PC-9 (cell line): ENCODE measurements at regions of chr10 and their contacts with region 1.

Region 1: GRCh38 chr10:75401569-75402485 is at the start of gene ZNF503:
- DNase-seq: peak; percentile 88 to 92
- H3K4me3 ChIP-seq: peak within 1 kb of the TSS; percentile 84
- H3K27ac ChIP-seq: peak within 1 kb of the TSS; percentile 90
- H3K4me1 ChIP-seq: peaks cover 8% of the 10 kb centered on the region
- H3K27me3 ChIP-seq: no peaks in the 10 kb centered on the region
- CTCF ChIP-seq: no peak
- total RNA-seq, gene ZNF503: 1.4 and 1.5 TPM in 2 replicates

Region 2: GRCh38 chr10:75922435-75922834 is 520.6 kb after region 1 on chr10:
- CTCF ChIA-PET with region 1: no interaction called
- POLR2A ChIA-PET with region 1: no interaction called
- intact Hi-C with region 1: loop called (anchors 10 kb)
- DNase-seq: no peak
- H3K4me3 ChIP-seq: no peak overlapping the region
- H3K27ac ChIP-seq: no peak overlapping the region
- H3K4me1 ChIP-seq: no peaks in the 10 kb centered on the region
- H3K27me3 ChIP-seq: no peaks in the 10 kb centered on the region
- CTCF ChIP-seq: peak; percentile 43

Region 3: DNA sequence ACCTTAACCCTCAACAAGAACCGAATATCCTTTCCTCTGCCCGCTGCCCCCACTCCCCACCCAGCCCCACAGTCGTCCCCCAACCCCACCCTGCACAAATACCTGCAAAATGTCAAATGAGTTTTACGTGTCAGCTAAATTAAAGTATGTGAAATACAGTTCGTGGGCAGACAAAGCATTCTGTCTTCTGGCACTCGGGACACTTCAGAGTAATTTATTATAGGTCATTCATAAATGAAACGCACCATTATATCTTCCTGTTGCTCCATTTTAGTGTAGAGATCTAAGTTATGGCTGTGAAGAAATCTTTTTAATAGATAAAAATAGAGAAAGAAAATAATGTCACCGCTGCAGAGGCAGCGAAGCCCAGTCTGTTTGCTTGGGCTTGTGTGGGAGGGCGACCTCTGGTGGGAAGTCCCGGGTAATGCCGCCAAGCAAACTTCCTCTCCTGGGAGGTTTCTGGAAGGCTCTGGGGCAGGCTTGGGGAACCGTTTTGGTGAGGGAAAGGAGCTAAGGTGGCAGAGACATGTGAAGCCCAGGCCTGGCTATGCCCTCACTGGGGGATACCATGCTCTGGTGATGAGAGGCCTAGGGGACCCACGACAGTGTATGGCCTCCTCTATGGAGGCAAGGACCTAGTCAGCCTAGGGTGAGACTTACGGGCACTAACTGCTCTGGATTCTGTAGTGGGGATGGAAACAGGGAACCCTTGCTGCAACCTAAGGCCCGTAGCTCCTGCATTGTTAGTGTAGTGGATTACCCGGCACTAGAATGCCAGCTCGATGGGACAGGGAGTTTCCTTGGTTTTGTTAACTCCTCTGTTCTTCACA is 634.5 kb after region 1 on chr10:
- CTCF ChIA-PET with region 1: no interaction called
- POLR2A ChIA-PET with region 1: no interaction called
- intact Hi-C with region 1: loop called (anchors 2 kb)
- DNase-seq: peak in 1 of 2 experiments; percentile 49
- H3K4me3 ChIP-seq: no peak overlapping the region
- H3K27ac ChIP-seq: no peak overlapping the region
- H3K4me1 ChIP-seq: no peaks in the 10 kb centered on the region
- H3K27me3 ChIP-seq: no peaks in the 10 kb centered on the region
- CTCF ChIP-seq: peak; percentile 91

Region 4: GRCh38 chr10:76303682-76304316 is 902.0 kb after region 1 on chr10:
- CTCF ChIA-PET with region 1: no interaction called
- POLR2A ChIA-PET with region 1: no interaction called
- intact Hi-C with region 1: loop called (anchors 2 kb)
- DNase-seq: peak in 1 of 2 experiments; percentile 9
- H3K4me3 ChIP-seq: no peak overlapping the region
- H3K27ac ChIP-seq: no peak overlapping the region
- H3K4me1 ChIP-seq: no peaks in the 10 kb centered on the region
- H3K27me3 ChIP-seq: no peaks in the 10 kb centered on the region
- CTCF ChIP-seq: peak; percentile 58

Region 5: GRCh38 chr10:76547352-76547972 is 1145.6 kb after region 1 on chr10:
- CTCF ChIA-PET with region 1: no interaction called
- POLR2A ChIA-PET with region 1: no interaction called
- intact Hi-C with region 1: loop called (anchors 2 kb)
- DNase-seq: peak; percentile 49 to 67
- H3K4me3 ChIP-seq: no peak overlapping the region
- H3K27ac ChIP-seq: no peak overlapping the region
- H3K4me1 ChIP-seq: no peaks in the 10 kb centered on the region
- H3K27me3 ChIP-seq: no peaks in the 10 kb centered on the region
- CTCF ChIP-seq: peak; percentile 90

Region 6: GRCh38 chr10:76984559-76985443 is 1583.0 kb after region 1 on chr10:
- CTCF ChIA-PET with region 1: no interaction called
- POLR2A ChIA-PET with region 1: no interaction called
- intact Hi-C with region 1: loop called (anchors 5 kb)
- DNase-seq: peak; percentile 67 to 69
- H3K4me3 ChIP-seq: no peak overlapping the region
- H3K27ac ChIP-seq: no peak overlapping the region
- H3K4me1 ChIP-seq: no peaks in the 10 kb centered on the region
- H3K27me3 ChIP-seq: peaks cover 41% of the 10 kb centered on the region
- CTCF ChIP-seq: peak; percentile 99

Region 7: DNA sequence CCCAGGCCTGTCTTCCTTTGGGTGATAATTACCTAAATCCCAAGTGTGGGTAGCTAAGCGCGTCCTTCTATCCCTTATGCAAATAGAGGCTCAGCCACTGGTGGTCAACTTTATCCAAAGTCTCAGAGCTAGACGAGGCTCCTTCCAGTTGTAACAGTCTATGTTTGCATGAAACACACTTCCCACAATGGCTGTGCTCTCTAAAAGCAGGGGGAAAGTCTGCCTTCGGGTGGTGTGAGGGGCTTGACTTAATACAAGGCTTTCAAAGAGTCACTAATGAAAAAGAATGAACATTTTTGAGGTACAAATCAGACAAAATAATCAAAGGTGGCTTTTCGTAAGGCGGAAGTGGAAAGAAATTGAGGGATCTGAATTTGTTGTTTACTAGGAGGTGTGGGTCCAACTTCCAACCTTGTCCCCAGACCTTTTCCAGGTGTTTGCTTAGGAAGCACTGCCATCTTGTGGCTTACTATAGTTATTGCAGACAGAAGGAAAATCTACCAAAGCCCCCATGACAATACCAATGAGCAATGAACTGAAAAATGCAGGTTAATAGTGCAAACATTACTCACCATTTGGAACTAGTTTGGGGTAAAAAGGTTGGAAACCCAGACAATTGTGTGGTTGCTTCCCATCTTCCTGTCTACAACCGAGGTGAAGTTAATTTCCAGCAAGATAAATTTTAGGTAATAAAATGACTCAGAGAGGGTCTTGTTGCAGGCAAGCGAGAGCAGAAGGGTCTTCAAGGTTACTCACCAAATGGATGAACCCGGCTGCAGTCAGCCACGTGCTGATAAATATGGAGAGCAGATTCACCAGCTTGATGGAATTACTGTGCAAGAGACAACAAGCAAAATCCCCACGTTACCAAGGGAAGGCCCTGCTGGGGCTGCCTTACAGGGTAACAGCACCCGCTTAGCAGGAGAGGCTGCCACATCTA is 1710.1 kb after region 1 on chr10:
- CTCF ChIA-PET with region 1: no interaction called
- POLR2A ChIA-PET with region 1: no interaction called
- intact Hi-C with region 1: loop called (anchors 10 kb)
- DNase-seq: peak; percentile 16 to 47
- H3K4me3 ChIP-seq: no peak overlapping the region
- H3K27ac ChIP-seq: no peak overlapping the region
- H3K4me1 ChIP-seq: peaks cover 5% of the 10 kb centered on the region; the same call in 1 of the 2 replicates
- H3K27me3 ChIP-seq: no peaks in the 10 kb centered on the region
- CTCF ChIP-seq: peak; percentile 97